Activated CD4-positive, alpha-beta T cell treated with anti-CD3 and anti-CD28 coated beads, Interleukin-2, amount 10 ng/mL, durations not matched to agents 24 days and 14 days (primary cell): ENCODE measurements at regions of chr17 and their contacts with region 1.

Region 1: GRCh38 chr17:75978938-75979704 is at the starts of genes ACOX1 and TEN1:
- DNase-seq: peak; percentile 98
- H3K4me3 Mint-ChIP-seq: peak within 1 kb of the TSS; percentile 98
- H3K27ac Mint-ChIP-seq: peak within 1 kb of the TSS; percentile 97
- H3K4me1 Mint-ChIP-seq: peaks cover 30% of the 10 kb centered on the region
- H3K27me3 Mint-ChIP-seq: no peaks in the 10 kb centered on the region
- total RNA-seq, gene ACOX1: 29.2 and 30.0 TPM in 2 replicates
- total RNA-seq, gene TEN1: 9.7 and 12.5 TPM in 2 replicates

Region 2: GRCh38 chr17:75855310-75856081 is 123.6 kb before region 1 on chr17 and contains the start of gene WBP2:
- intact Hi-C with region 1: loop called (anchors 2 kb)
- DNase-seq: peak; percentile 99
- H3K4me3 Mint-ChIP-seq: no peak within 1 kb of the TSS
- H3K27ac Mint-ChIP-seq: peak within 1 kb of the TSS; percentile 92
- H3K4me1 Mint-ChIP-seq: peaks cover 31% of the 10 kb centered on the region
- H3K27me3 Mint-ChIP-seq: no peaks in the 10 kb centered on the region
- total RNA-seq, gene WBP2: 68.9 and 70.0 TPM in 2 replicates

Region 3: GRCh38 chr17:75914643-75915267 is 64.4 kb before region 1 on chr17:
- intact Hi-C with region 1: no loop called
- DNase-seq: no peak
- H3K4me3 Mint-ChIP-seq: no peak overlapping the region
- H3K27ac Mint-ChIP-seq: no peak overlapping the region
- H3K4me1 Mint-ChIP-seq: no peaks in the 10 kb centered on the region
- H3K27me3 Mint-ChIP-seq: no peaks in the 10 kb centered on the region

Region 4: DNA sequence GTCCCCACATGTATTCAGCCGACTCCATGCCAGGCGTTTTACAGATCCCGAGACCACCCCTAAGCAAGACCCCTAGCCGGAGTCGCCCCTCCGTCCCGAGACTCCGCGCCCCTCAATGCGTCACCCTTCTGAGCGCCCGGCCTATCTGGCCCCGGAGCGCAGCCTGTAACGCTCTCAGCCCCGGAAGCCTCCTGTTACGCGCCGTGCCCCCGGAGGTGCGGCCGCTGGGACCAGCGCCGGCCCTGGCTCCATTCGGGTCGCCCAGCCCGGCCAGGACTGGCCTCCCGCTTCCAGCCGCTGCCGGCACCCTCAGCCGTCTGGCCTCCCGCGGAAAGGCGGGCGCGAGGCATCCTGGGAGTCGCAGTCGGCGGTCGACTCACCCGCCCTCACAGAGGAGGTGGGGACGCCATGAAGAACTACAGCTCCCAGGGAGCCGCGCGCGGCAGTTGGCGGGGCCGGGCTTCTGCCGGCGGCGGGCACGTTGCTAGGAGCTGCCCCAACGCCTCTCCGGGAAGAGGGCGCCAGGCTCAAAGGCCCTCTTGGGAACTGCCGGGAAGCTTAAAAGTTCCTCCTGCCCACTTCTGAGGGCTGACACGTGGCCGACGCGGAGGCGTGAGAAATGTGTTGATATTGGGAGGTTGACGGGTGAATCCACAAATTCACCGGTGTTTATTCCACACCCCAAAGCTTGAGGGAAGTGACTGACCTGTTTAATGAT is 38.2 kb before region 1 on chr17 and contains the start of gene FBF1:
- intact Hi-C with region 1: loop called (anchors 1 kb)
- DNase-seq: peak; percentile 97
- H3K4me3 Mint-ChIP-seq: peak within 1 kb of the TSS; percentile 92
- H3K27ac Mint-ChIP-seq: peak within 1 kb of the TSS; percentile 77
- H3K4me1 Mint-ChIP-seq: peaks cover 12% of the 10 kb centered on the region
- H3K27me3 Mint-ChIP-seq: no peaks in the 10 kb centered on the region
- total RNA-seq, gene FBF1: 17.5 and 18.6 TPM in 2 replicates

Region 5: DNA sequence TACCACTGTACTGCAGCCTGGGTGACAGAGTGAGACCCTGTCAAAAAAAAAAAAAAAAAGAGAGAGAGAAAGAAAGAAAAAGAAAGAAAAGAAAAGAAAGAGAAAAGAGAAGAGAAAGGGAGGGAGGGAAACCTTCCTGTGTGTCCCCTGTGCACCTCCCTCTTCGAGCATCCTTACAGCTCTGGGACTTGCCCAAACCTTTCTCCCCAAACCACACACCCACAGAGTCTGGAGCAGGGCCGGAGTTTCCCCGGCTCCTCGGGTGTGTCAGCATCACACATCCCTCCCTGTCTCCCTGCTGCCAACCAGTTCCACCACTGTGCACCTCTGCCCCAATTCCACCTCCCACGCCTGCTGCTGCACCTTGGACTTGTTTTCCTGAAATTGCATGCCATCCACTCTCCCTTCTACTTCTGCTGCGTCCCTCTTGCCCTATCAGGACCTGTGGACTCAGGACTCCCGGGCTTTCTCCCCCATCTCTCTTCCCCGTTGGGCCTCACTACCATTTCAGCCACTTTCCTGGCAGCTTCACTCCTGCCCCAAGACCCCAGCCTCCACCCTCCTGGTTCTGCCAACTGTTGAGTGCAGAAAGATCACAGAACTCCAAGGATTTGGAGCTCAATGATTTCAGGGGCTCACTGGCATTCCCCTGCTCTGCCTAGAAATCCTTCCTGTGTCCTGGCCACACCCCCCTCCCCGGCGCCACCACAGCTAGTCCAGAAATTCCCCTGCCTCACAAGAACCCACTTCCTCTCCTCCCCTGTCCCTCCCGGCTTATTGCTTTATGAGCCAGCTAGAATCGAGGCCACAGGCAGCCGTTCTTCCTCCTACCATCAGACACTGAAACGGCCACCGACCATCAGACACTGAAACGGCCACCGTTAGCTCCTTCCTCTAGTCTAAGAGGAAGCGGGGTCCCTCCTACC is 17.8 kb after region 1 on chr17:
- intact Hi-C with region 1: loop called (anchors 2 kb)
- DNase-seq: peak; percentile 83
- H3K4me3 Mint-ChIP-seq: peak overlapping the region; percentile 65
- H3K27ac Mint-ChIP-seq: peak overlapping the region; percentile 79
- H3K4me1 Mint-ChIP-seq: peaks cover 19% of the 10 kb centered on the region
- H3K27me3 Mint-ChIP-seq: no peaks in the 10 kb centered on the region